ENCODE measurements at regions of chr2 and their contacts with region 1.

Region 1: DNA sequence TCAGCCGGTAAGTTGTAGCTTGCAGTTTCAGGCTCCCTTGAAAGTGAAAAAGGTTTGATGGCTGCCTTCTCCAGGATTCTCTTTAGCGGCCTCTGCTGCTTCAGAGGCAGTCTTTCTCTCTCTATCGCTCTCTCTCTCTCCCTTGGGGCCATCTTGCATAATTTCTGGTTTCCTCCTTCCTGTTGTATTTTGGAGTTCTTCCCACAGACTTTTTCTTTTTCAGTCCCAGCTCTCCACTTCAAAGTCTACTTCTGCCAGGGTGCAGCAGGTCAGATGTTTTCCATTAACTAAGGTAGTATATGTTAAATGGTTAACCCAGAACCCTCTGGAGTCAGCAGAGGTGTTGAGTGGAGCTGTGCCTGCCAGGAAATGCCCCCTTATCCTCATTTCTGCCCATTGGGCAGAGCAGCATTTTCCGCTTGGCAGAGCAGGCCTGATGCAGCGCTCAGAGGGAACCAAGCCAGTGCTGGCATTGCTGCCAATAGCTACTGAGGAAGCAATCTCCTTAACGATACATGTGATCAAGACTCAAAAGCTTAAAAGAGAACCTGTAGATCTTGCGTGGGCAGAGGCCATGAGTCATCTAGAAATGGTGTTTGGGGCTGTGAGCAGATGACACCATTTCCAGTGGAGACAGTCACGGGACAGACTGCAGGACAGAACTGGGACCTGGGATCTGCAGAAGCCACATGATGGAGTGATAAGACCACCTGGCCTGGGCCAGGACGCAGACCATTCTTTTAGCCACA is 20.8 kb downstream of the DBI start:
- DNase-seq: no peak
- ATAC-seq: no peak
- H3K4me3 ChIP-seq: no peak overlapping the region
- H3K27ac ChIP-seq: no peak overlapping the region
- H3K4me1 ChIP-seq: no peaks in the 10 kb centered on the region
- H3K27me3 ChIP-seq: peaks cover 3% of the 10 kb centered on the region; the same call in 1 of the 2 replicates
- CTCF ChIP-seq: no peak

Region 2: GRCh38 chr2:119234377-119235019 is 153.1 kb before region 1 on chr2:
- CTCF ChIA-PET with region 1: no interaction called
- POLR2A ChIA-PET with region 1: no interaction called
- in situ Hi-C with region 1: no loop called
- intact Hi-C with region 1: no loop called
- DNase-seq: no peak
- ATAC-seq: peak; percentile 69
- H3K4me3 ChIP-seq: no peak overlapping the region
- H3K27ac ChIP-seq: no peak overlapping the region
- H3K4me1 ChIP-seq: peaks cover 50% of the 10 kb centered on the region
- H3K27me3 ChIP-seq: no peaks in the 10 kb centered on the region
- CTCF ChIP-seq: no peak; the same call in 1 of the 2 replicates

Region 3: GRCh38 chr2:119425620-119426395 is 38.3 kb after region 1 on chr2:
- CTCF ChIA-PET with region 1: interaction called, 11 read pairs
- POLR2A ChIA-PET with region 1: no interaction called
- in situ Hi-C with region 1: no loop called
- intact Hi-C with region 1: no loop called
- DNase-seq: no peak
- ATAC-seq: no peak
- H3K4me3 ChIP-seq: no peak overlapping the region
- H3K27ac ChIP-seq: no peak overlapping the region
- H3K4me1 ChIP-seq: no peaks in the 10 kb centered on the region
- H3K27me3 ChIP-seq: peaks cover 23% of the 10 kb centered on the region
- CTCF ChIP-seq: no peak

Region 4: DNA sequence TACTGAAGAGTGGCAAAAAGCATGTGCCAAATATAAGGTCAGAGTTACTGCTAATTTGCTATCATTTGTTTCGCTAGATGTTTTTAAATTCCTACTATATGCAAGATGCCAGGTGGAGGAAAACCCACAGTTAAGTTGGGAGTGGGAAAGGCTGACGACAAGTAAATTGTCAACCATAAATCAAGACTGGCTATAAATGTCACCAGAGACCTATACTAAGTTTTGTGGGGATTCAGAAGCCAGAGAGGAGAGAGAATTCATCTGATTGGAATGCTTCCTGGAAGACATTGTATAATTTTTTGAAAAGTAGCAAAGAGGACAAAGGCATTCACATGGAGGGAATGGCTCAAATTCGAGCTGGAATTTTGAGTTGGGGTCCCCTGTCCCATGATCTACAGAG is 221.0 kb after region 1 on chr2:
- CTCF ChIA-PET with region 1: no interaction called
- POLR2A ChIA-PET with region 1: no interaction called
- in situ Hi-C with region 1: no loop called
- intact Hi-C with region 1: no loop called
- DNase-seq: no peak
- ATAC-seq: no peak
- H3K4me3 ChIP-seq: no peak overlapping the region
- H3K27ac ChIP-seq: no peak overlapping the region
- H3K4me1 ChIP-seq: no peaks in the 10 kb centered on the region
- H3K27me3 ChIP-seq: peaks cover 9% of the 10 kb centered on the region
- CTCF ChIP-seq: no peak